ENCODE measurements at regions of chr22 and their contacts with region 1.

Region 1: GRCh38 chr22:29267858-29268417 is at the starts of genes EWSR1 and RHBDD3:
- DNase-seq: peak; percentile 95
- ATAC-seq: peak; percentile 88
- H3K4me3 Mint-ChIP-seq: peak within 1 kb of the TSS; percentile 85
- H3K27ac Mint-ChIP-seq: peak within 1 kb of the TSS; percentile 97
- H3K4me1 Mint-ChIP-seq: peaks cover 39% of the 10 kb centered on the region
- H3K27me3 Mint-ChIP-seq: no peaks in the 10 kb centered on the region
- CTCF ChIP-seq: no peak
- total RNA-seq, gene EWSR1: 307 to 315 TPM
- total RNA-seq, gene RHBDD3: 24.5 to 25.4 TPM

Region 2: DNA sequence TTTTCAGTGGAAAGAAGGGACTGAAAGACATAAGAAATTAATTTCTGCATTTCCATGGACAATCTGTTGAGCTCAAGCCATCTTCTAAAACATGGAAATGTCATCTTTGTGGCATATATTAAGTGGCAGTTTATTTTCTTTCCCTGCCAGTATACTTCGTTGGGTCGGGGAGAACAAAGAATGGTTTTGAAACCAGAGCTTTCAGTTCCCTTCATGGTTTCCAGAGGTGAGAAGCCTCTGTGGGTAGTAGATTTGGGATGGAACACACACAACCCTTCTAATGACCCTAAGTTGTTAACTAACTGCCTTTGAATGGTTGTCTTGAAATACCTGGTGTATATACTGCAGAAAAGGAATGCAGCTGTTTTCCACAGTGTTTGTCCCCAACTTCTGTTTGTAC is 20.9 kb after region 1 on chr22:
- CTCF ChIA-PET with region 1: interaction called, 3 read pairs
- POLR2A ChIA-PET with region 1: interaction called, 51 read pairs
- intact Hi-C with region 1: no loop called
- DNase-seq: no peak
- ATAC-seq: no peak
- H3K4me3 Mint-ChIP-seq: no peak overlapping the region
- H3K27ac Mint-ChIP-seq: peak overlapping the region; percentile 0
- H3K4me1 Mint-ChIP-seq: peaks cover 17% of the 10 kb centered on the region
- H3K27me3 Mint-ChIP-seq: no peaks in the 10 kb centered on the region
- CTCF ChIP-seq: no peak

Region 3: GRCh38 chr22:29387921-29388758 is 120.2 kb after region 1 on chr22 and contains the start of gene AP1B1:
- CTCF ChIA-PET with region 1: no interaction called
- POLR2A ChIA-PET with region 1: no interaction called
- intact Hi-C with region 1: no loop called
- DNase-seq: peak; percentile 97
- ATAC-seq: peak; percentile 99
- H3K4me3 Mint-ChIP-seq: peak within 1 kb of the TSS; percentile 91
- H3K27ac Mint-ChIP-seq: peak within 1 kb of the TSS; percentile 91
- H3K4me1 Mint-ChIP-seq: peaks cover 39% of the 10 kb centered on the region
- H3K27me3 Mint-ChIP-seq: no peaks in the 10 kb centered on the region
- CTCF ChIP-seq: no peak
- total RNA-seq, gene AP1B1: 57.5 to 59.0 TPM